Adrenal gland (tissue), 19 donors: ENCODE measurements at regions of chr3 and their contacts with region 1.

Region 1: GRCh38 chr3:25594007-25594502 is 70.7 kb downstream of the TOP2B start:
- DNase-seq: peak in 1 of 7 donors; percentile 25
- H3K4me3 ChIP-seq: no peak overlapping the region
- H3K27ac ChIP-seq: peak overlapping the region in 1 of 5 donors; percentile 56
- H3K4me1 ChIP-seq: peaks cover 6 to 49% of the 10 kb centered on the region in 2 donors
- H3K27me3 ChIP-seq: no peaks in the 10 kb centered on the region
- CTCF ChIP-seq: peak; percentile 74 to 94 (median 86)
- POLR2A ChIP-seq: no peak

Region 2: GRCh38 chr3:24608701-24609390 is 985.2 kb before region 1 on chr3:
- intact Hi-C with region 1: no loop called
- DNase-seq: no peak
- H3K4me3 ChIP-seq: no peak overlapping the region
- H3K27ac ChIP-seq: no peak overlapping the region
- H3K4me1 ChIP-seq: no peaks in the 10 kb centered on the region
- H3K27me3 ChIP-seq: no peaks in the 10 kb centered on the region
- CTCF ChIP-seq: no peak
- POLR2A ChIP-seq: no peak

Region 3: GRCh38 chr3:24773798-24774197 is 820.3 kb before region 1 on chr3:
- intact Hi-C with region 1: loop called (anchors 10 kb)
- DNase-seq: peak; percentile 50 to 74 (median 60)
- H3K4me3 ChIP-seq: no peak overlapping the region
- H3K27ac ChIP-seq: no peak overlapping the region
- H3K4me1 ChIP-seq: no peaks in the 10 kb centered on the region
- H3K27me3 ChIP-seq: no peaks in the 10 kb centered on the region
- CTCF ChIP-seq: peak; percentile 62 to 80 (median 68)
- POLR2A ChIP-seq: no peak

Region 4: GRCh38 chr3:25433868-25434267 is 160.2 kb before region 1 on chr3:
- intact Hi-C with region 1: loop called in 1 of 2 experiments (anchors 5 kb)
- DNase-seq: peak in 6 of 7 donors; percentile 32 to 79 (median 51)
- H3K4me3 ChIP-seq: no peak overlapping the region
- H3K27ac ChIP-seq: peak overlapping the region in 2 of 5 donors; percentile 31 to 64
- H3K4me1 ChIP-seq: no peaks in the 10 kb centered on the region
- H3K27me3 ChIP-seq: no peaks in the 10 kb centered on the region
- CTCF ChIP-seq: no peak
- POLR2A ChIP-seq: no peak

Region 5: GRCh38 chr3:25445731-25446130 is 148.3 kb before region 1 on chr3:
- intact Hi-C with region 1: no loop called
- DNase-seq: no peak
- H3K4me3 ChIP-seq: no peak overlapping the region
- H3K27ac ChIP-seq: no peak overlapping the region
- H3K4me1 ChIP-seq: peaks cover 10 to 21% of the 10 kb centered on the region in 2 donors
- H3K27me3 ChIP-seq: no peaks in the 10 kb centered on the region
- CTCF ChIP-seq: no peak
- POLR2A ChIP-seq: no peak

Region 6: GRCh38 chr3:25558111-25558510 is 35.9 kb before region 1 on chr3:
- intact Hi-C with region 1: no loop called
- DNase-seq: peak in 2 of 7 donors; percentile 10 to 29
- H3K4me3 ChIP-seq: no peak overlapping the region
- H3K27ac ChIP-seq: no peak overlapping the region
- H3K4me1 ChIP-seq: peaks cover 3 to 26% of the 10 kb centered on the region in 2 donors
- H3K27me3 ChIP-seq: no peaks in the 10 kb centered on the region
- CTCF ChIP-seq: no peak
- POLR2A ChIP-seq: no peak

Region 7: GRCh38 chr3:26018889-26019288 is 424.8 kb after region 1 on chr3:
- intact Hi-C with region 1: no loop called
- DNase-seq: no peak
- H3K4me3 ChIP-seq: no peak overlapping the region
- H3K27ac ChIP-seq: no peak overlapping the region
- H3K4me1 ChIP-seq: no peaks in the 10 kb centered on the region
- H3K27me3 ChIP-seq: no peaks in the 10 kb centered on the region
- CTCF ChIP-seq: no peak
- POLR2A ChIP-seq: no peak